Activated naive CD4-positive, alpha-beta T cell treated with anti-CD3 and anti-CD28 coated beads for 36 hours (primary cell): ENCODE measurements at regions of chr2 and their contacts with region 1.

Region 1: DNA sequence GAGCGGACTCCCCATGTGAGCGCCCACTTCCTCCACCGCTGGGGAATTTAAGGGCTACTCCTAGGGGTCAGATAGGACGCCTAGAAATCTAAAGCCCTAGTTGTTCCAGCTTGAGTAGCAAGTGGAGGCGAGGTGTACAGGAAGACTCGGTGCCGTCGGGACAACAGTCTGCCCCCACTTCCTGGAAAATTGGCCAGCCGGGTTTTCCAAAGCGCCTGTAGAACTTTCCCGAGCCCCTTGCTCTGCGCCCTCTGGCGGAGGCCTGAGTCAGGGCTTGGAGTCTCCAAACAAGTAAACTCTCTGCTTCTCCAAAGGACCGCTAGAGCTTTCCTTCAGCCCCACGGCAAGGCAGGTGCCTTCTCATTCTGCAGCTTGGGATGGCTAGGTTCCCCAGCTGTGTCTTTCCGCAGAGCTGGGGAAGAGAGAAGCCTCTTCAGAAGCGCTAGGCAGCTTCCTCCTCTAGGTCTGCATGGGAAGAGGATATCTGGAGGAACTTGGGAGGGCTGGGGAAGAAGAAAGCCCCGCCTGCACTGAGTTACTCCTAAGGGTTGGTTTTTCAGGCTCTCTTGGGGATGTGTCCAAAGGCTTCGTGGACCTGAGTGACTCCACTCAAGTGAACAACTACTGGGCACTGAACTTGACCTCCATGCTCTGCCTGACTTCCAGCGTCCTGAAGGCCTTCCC is 688 bp downstream of the SPR start:
- DNase-seq: peak; percentile 76
- H3K4me3 Mint-ChIP-seq: peak overlapping the region; percentile 76
- H3K27ac Mint-ChIP-seq: no peak overlapping the region
- H3K4me1 Mint-ChIP-seq: peaks cover 6% of the 10 kb centered on the region
- H3K27me3 Mint-ChIP-seq: peaks cover 63% of the 10 kb centered on the region

Region 2: GRCh38 chr2:72862239-72862988 is 25.5 kb before region 1 on chr2:
- CTCF ChIA-PET with region 1: interaction called, 16 read pairs
- intact Hi-C with region 1: loop called (anchors 1 kb)
- DNase-seq: peak; percentile 91
- H3K4me3 Mint-ChIP-seq: peak overlapping the region; percentile 31
- H3K27ac Mint-ChIP-seq: no peak overlapping the region
- H3K4me1 Mint-ChIP-seq: peaks cover 10% of the 10 kb centered on the region
- H3K27me3 Mint-ChIP-seq: peaks cover 49% of the 10 kb centered on the region

Region 3: DNA sequence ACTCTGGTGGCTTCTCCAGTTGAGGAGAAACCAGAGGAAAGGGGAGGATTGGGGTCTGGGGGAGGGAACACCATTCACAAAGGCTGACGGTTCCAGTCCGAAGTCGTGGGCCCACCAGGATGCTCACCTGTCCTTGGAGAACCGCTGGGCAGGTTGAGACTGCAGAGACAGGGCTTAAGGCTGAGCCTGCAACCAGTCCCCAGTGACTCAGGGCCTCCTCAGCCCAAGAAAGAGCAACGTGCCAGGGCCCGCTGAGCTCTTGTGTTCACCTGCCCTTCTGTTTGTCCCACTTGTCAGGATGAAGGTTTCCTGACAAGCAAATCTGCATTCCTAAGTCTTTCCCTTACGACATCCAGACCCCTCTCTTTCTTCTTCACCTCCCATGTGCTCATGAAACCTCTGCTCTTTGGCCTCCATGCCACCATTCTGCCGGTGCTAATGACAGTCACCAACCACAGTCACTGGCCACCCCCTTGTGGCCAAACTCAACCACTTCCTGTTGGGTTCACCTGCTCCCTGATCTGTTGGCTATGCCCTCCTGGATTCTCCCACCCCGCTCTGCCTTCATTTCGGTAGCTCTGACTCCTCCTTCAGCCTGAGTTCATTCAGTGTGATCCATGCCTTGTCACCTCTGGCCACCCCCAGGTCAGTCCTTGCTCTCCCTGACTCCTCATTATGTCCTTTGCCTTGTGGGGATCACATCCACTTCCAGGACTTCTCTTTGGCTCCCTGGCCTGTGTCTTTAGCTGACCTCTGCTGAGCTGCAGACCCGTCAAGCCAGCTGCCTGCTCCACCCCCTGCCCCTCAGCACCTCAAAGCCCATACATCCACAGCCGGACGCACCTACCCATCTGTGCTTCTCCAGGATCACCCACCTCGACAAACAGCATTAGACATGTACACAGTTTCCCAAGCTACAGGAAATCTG is 47.1 kb after region 1 on chr2:
- CTCF ChIA-PET with region 1: interaction called, 6 read pairs
- intact Hi-C with region 1: loop called (anchors 1 kb)
- DNase-seq: no peak
- H3K4me3 Mint-ChIP-seq: no peak overlapping the region
- H3K27ac Mint-ChIP-seq: no peak overlapping the region
- H3K4me1 Mint-ChIP-seq: no peaks in the 10 kb centered on the region
- H3K27me3 Mint-ChIP-seq: peaks cover 6% of the 10 kb centered on the region

Region 4: DNA sequence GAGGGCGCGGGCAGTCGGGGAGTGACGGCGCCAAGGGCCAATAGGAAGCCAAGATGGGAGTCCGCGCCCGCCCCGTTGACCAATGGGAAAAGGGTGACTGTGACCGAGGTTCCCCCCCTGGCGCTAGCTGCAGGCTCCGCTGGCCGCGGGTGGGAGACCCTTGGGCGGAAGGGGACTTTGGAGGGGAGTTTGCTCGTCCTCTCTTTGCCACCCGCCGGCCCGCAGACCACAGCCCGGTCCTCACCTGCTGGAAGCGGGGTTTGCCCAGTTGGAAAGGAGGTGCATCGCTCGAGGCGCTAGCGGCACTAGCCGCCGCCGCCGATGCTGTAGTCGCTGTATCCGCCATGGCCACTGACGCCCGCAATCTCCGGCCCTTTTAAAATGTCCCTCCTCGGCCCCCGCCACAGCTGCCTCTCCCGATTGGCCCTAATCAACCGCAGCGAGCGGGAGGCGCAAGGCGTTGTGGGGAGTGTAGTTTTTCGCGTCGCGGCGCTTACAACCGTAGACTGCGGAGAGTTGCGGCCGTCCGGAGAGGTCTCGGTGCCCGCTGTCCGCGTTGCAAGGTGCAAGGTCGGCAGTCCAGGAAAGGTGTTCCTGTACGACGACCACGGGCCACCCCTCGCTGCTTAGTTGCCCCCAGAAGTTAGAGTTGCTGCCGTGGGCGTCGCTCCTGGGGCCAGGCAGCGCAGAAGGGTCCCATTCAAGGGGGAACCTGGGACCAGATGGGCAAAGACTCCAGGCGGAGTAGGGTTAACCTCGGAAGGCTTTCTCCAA is 183.7 kb after region 1 on chr2 and contains the start of gene SFXN5:
- CTCF ChIA-PET with region 1: no interaction called
- intact Hi-C with region 1: loop called (anchors 2 kb)
- DNase-seq: peak; percentile 96
- H3K4me3 Mint-ChIP-seq: peak within 1 kb of the TSS; percentile 88
- H3K27ac Mint-ChIP-seq: peak within 1 kb of the TSS; percentile 87
- H3K4me1 Mint-ChIP-seq: peaks cover 20% of the 10 kb centered on the region
- H3K27me3 Mint-ChIP-seq: no peaks in the 10 kb centered on the region
- total RNA-seq, gene SFXN5: 5.3 to 6.8 TPM

Region 5: DNA sequence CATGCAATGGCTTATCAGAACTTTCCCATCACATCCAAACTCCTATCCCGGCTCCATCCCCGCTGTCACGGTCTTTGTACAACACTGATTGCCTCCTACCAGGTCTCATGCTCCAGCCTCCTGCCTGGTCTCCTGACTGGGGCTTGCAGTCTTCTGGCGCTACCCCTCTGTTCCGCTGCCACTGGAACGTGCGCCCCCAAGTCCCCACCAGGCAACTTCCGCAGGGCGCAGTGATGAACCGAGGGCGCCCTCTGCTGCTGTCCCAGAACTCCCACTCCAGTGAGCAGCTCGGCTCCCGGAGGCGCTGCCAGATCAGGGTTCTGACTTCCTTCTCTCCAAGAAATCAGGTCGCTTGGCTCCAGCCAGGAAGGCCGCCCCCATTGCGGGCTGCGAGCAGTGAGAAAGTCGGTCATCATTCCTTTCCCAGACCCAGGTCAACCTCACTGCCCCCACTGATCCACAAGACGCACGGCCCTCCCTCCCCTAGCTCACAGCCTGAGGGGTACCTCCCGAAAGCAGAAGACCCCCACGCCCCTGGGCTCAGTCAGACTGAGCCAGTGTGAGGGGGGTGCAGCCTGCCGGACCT is 268.7 kb after region 1 on chr2:
- CTCF ChIA-PET with region 1: interaction called, 6 read pairs
- intact Hi-C with region 1: loop called (anchors 1 kb)
- DNase-seq: peak; percentile 62
- H3K4me3 Mint-ChIP-seq: no peak overlapping the region
- H3K27ac Mint-ChIP-seq: no peak overlapping the region
- H3K4me1 Mint-ChIP-seq: no peaks in the 10 kb centered on the region
- H3K27me3 Mint-ChIP-seq: peaks cover 30% of the 10 kb centered on the region

Region 6: DNA sequence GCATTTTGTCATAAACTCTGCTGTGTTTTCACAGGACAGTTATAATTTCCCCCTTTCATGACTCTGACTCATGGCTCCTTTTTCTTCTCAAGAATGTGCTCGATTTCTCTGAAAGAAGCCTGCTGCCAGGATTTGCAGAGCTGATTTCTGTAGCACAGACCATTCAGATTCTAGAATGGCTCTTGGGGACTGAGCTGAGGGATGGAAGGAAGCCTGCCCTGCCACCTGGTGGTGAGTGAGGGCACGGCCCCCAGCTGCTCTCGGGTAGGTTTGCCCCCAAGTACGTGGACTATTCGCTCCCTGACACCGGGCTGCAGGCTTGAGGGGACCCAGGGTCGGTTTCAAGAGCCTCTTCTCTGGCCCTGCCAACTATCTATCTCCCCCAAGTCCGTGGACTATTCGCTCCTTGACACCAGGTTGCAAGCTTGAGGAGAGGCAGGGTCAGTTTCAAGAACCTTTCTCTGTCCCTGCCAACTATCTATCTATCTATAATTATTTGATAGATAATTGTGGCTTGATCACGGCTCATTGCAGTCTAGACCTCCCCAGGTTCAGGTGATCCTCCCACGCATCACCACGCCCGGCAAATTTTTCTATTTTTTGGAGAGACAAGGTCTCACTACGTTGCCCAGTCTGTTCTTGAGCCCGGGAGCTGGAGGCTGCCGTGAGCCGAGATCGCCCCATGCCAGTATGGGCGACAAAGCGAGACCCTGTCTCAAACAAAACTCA is 324.7 kb after region 1 on chr2:
- CTCF ChIA-PET with region 1: interaction called, 12 read pairs
- intact Hi-C with region 1: loop called (anchors 1 kb)
- DNase-seq: peak; percentile 85
- H3K4me3 Mint-ChIP-seq: no peak overlapping the region
- H3K27ac Mint-ChIP-seq: no peak overlapping the region
- H3K4me1 Mint-ChIP-seq: peaks cover 29% of the 10 kb centered on the region
- H3K27me3 Mint-ChIP-seq: peaks cover 3% of the 10 kb centered on the region